Activated B cell treated with CpG ODN at 0.5 μM for 24 hours (primary cell): ENCODE measurements at regions of chr17 and their contacts with region 1.

Region 1: GRCh38 chr17:39980351-39981206 is at the start of gene PSMD3:
- DNase-seq: peak; percentile 90
- ATAC-seq: peak; percentile 93
- H3K4me3 Mint-ChIP-seq: peak within 1 kb of the TSS; percentile 96
- H3K27ac Mint-ChIP-seq: peak within 1 kb of the TSS; percentile 96
- H3K4me1 Mint-ChIP-seq: peaks cover 36% of the 10 kb centered on the region
- H3K27me3 Mint-ChIP-seq: peaks cover under 1% of the 10 kb centered on the region
- CTCF ChIP-seq: no peak
- total RNA-seq, gene PSMD3: 115 and 127 TPM in 2 replicates

Region 2: GRCh38 chr17:39547713-39548478 is 432.7 kb before region 1 on chr17:
- CTCF ChIA-PET with region 1: no interaction called
- POLR2A ChIA-PET with region 1: no interaction called
- intact Hi-C with region 1: loop called (anchors 1 kb)
- DNase-seq: peak; percentile 74
- ATAC-seq: peak; percentile 65
- H3K4me3 Mint-ChIP-seq: no peak overlapping the region
- H3K27ac Mint-ChIP-seq: no peak overlapping the region
- H3K4me1 Mint-ChIP-seq: peaks cover 40% of the 10 kb centered on the region
- H3K27me3 Mint-ChIP-seq: no peaks in the 10 kb centered on the region
- CTCF ChIP-seq: peak; percentile 78

Region 3: GRCh38 chr17:39636927-39637736 is 343.4 kb before region 1 on chr17 and contains the start of gene STARD3:
- CTCF ChIA-PET with region 1: interaction called, 3 read pairs
- POLR2A ChIA-PET with region 1: no interaction called
- intact Hi-C with region 1: loop called (anchors 5 kb)
- DNase-seq: peak; percentile 90
- ATAC-seq: peak; percentile 92
- H3K4me3 Mint-ChIP-seq: peak within 1 kb of the TSS; percentile 90
- H3K27ac Mint-ChIP-seq: peak within 1 kb of the TSS; percentile 86
- H3K4me1 Mint-ChIP-seq: peaks cover 63% of the 10 kb centered on the region
- H3K27me3 Mint-ChIP-seq: no peaks in the 10 kb centered on the region
- CTCF ChIP-seq: no peak
- total RNA-seq, gene STARD3: 51.8 and 58.2 TPM in 2 replicates

Region 4: GRCh38 chr17:39794249-39794970 is 186.2 kb before region 1 on chr17:
- CTCF ChIA-PET with region 1: no interaction called
- POLR2A ChIA-PET with region 1: interaction called, 6 read pairs
- intact Hi-C with region 1: loop called (anchors 1 kb)
- DNase-seq: no peak
- ATAC-seq: peak; percentile 94
- H3K4me3 Mint-ChIP-seq: peak overlapping the region; percentile 66
- H3K27ac Mint-ChIP-seq: peak overlapping the region; percentile 93
- H3K4me1 Mint-ChIP-seq: peaks cover 85% of the 10 kb centered on the region
- H3K27me3 Mint-ChIP-seq: no peaks in the 10 kb centered on the region
- CTCF ChIP-seq: no peak

Region 5: GRCh38 chr17:39872751-39873150 is 107.8 kb before region 1 on chr17:
- CTCF ChIA-PET with region 1: interaction called, 61 read pairs
- POLR2A ChIA-PET with region 1: interaction called, 39 read pairs
- intact Hi-C with region 1: loop called (anchors 1 kb)
- DNase-seq: no peak
- ATAC-seq: peak; percentile 45
- H3K4me3 Mint-ChIP-seq: peak overlapping the region; percentile 58
- H3K27ac Mint-ChIP-seq: peak overlapping the region; percentile 62
- H3K4me1 Mint-ChIP-seq: peaks cover 43% of the 10 kb centered on the region
- H3K27me3 Mint-ChIP-seq: no peaks in the 10 kb centered on the region
- CTCF ChIP-seq: no peak

Region 6: GRCh38 chr17:39952680-39953470 is 27.7 kb before region 1 on chr17:
- CTCF ChIA-PET with region 1: interaction called, 19 read pairs
- POLR2A ChIA-PET with region 1: interaction called, 30 read pairs
- intact Hi-C with region 1: loop called (anchors 1 kb)
- DNase-seq: peak; percentile 88
- ATAC-seq: peak; percentile 85
- H3K4me3 Mint-ChIP-seq: peak overlapping the region; percentile 85
- H3K27ac Mint-ChIP-seq: peak overlapping the region; percentile 83
- H3K4me1 Mint-ChIP-seq: peaks cover 29% of the 10 kb centered on the region
- H3K27me3 Mint-ChIP-seq: no peaks in the 10 kb centered on the region
- CTCF ChIP-seq: no peak

Region 7: DNA sequence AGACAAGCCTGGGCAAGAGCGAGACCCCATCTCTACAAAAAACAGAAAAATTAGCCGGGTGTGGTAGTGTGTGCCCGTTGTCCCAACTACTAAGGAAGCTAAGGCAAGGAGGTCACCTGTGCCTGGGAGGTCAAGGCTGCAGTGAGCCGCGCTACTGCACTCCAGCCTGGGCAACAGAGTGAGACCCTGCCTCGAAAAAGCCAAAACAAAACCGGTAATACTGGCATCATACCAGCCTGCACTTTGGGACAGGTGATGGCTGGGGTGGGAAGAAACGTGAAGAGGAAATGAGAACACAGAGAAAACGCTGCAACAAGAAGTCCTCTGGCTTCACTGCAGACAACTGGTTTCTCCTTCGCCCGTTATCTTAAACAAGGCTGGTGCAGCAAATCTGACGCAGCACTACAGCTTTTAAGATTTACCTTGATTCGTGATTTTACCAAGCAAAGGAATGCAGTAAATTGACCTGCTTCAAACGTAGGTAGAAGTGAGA is 159.0 kb after region 1 on chr17:
- CTCF ChIA-PET with region 1: no interaction called
- POLR2A ChIA-PET with region 1: interaction called, 9 read pairs
- intact Hi-C with region 1: loop called (anchors 1 kb)
- DNase-seq: peak; percentile 20
- ATAC-seq: peak; percentile 19
- H3K4me3 Mint-ChIP-seq: peak overlapping the region; percentile 93
- H3K27ac Mint-ChIP-seq: peak overlapping the region; percentile 92
- H3K4me1 Mint-ChIP-seq: peaks cover 29% of the 10 kb centered on the region
- H3K27me3 Mint-ChIP-seq: no peaks in the 10 kb centered on the region
- CTCF ChIP-seq: no peak